Panc1 (cell line): ENCODE measurements at regions of chr15 and their contacts with region 1.

Region 1: DNA sequence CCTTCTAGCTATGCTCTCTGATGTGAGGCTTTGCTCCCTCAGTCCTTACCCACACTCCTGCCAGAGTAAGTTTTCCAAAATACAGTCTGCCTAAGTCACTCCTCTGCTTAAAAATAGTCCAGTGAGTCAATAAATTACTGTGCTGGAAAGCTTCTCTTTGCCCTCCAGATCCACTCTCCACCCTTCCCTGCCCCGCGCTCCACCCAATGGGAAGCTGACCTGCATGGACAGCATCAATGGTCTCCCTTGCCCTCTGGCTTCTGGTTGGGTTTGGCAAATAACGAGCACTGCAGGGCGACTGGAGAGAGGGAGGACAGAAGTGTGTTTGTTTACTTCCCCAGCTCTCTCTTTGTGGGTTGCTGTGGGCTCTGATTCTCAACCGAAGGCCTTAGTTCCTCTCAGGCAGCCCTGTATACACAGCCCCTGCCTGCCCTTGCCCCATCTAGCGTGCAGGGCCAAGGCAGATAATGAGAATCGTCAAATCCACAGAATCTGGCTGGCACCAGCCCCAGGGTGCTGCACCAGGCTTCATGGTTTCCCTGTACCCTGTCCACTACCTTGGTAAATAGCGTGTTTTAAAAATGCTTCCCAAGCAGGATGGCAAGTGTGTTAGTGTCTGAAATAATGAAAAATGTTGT is 110.4 kb downstream of the ADAMTSL3 start:
- DNase-seq: no peak
- ATAC-seq: no peak
- H3K4me3 ChIP-seq: no peak overlapping the region
- H3K27ac ChIP-seq: no peak overlapping the region
- H3K4me1 ChIP-seq: no peaks in the 10 kb centered on the region
- H3K27me3 ChIP-seq: no peaks in the 10 kb centered on the region
- CTCF ChIP-seq: no peak

Region 2: GRCh38 chr15:83673385-83673784 is 90.9 kb before region 1 on chr15:
- CTCF ChIA-PET with region 1: no interaction called
- POLR2A ChIA-PET with region 1: no interaction called
- in situ Hi-C with region 1: no loop called
- intact Hi-C with region 1: loop called (anchors 5 kb)
- DNase-seq: no peak
- ATAC-seq: no peak
- H3K4me3 ChIP-seq: no peak overlapping the region
- H3K27ac ChIP-seq: no peak overlapping the region
- H3K4me1 ChIP-seq: no peaks in the 10 kb centered on the region
- H3K27me3 ChIP-seq: no peaks in the 10 kb centered on the region; the same call in 1 of the 2 replicates
- CTCF ChIP-seq: no peak

Region 3: DNA sequence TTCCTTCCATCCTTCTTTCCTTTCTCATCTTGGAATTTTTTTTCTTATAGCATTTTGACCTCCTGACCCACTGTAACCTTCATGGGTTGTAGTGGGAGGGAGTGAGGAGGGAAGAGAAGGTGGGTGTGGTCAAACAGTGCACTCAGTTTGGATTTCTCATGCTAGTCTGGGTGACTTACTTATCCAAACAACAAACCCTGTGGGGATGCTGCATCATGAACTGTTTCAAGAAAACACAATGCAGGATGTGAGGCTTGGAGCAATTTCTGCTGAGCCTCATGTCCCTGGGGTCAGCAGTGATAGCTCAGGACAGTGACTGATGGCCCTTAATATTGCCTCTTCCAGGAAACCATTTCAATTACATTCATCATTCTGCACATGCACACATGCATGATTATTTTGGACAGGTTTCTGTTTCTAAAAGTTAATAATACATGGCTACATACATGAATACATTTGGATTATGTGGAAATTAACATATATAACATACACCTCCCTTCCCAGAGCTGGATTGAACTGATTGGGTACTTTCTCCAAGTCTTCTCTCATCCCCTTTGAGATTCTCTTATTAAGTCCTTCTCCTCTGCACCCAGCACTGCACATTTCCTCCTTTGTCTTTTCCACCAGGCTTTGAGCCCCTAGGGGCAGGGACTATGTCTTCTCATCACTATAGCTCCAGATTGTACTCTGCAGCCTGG is 49.2 kb before region 1 on chr15:
- CTCF ChIA-PET with region 1: no interaction called
- POLR2A ChIA-PET with region 1: no interaction called
- in situ Hi-C with region 1: no loop called
- intact Hi-C with region 1: no loop called
- DNase-seq: no peak
- ATAC-seq: no peak
- H3K4me3 ChIP-seq: no peak overlapping the region
- H3K27ac ChIP-seq: no peak overlapping the region
- H3K4me1 ChIP-seq: no peaks in the 10 kb centered on the region
- H3K27me3 ChIP-seq: no peaks in the 10 kb centered on the region
- CTCF ChIP-seq: no peak

Region 4: GRCh38 chr15:83794209-83794608 is 29.9 kb after region 1 on chr15:
- CTCF ChIA-PET with region 1: no interaction called
- POLR2A ChIA-PET with region 1: no interaction called
- in situ Hi-C with region 1: no loop called
- intact Hi-C with region 1: no loop called
- DNase-seq: no peak
- ATAC-seq: no peak
- H3K4me3 ChIP-seq: no peak overlapping the region
- H3K27ac ChIP-seq: no peak overlapping the region
- H3K4me1 ChIP-seq: no peaks in the 10 kb centered on the region
- H3K27me3 ChIP-seq: no peaks in the 10 kb centered on the region
- CTCF ChIP-seq: no peak